Common myeloid progenitor, CD34-positive (primary cell): ENCODE measurements at regions of chr3 and their contacts with region 1.

Region 1: GRCh38 chr3:88203642-88204055 is 53.9 kb downstream of the C3orf38 start:
- DNase-seq: peak; percentile 55 to 76 (median 70)
- H3K4me3 ChIP-seq: no peak overlapping the region
- H3K27ac ChIP-seq: no peak overlapping the region
- H3K4me1 ChIP-seq: peaks cover 0 to 2% (median 0%) of the 10 kb centered on the region in 4 experiments
- H3K27me3 ChIP-seq: peaks cover 0 to 2% (median 0%) of the 10 kb centered on the region in 5 experiments

Region 2: GRCh38 chr3:90091204-90091924 is 1887.7 kb after region 1 on chr3:
- CTCF ChIA-PET with region 1: interaction called, 15 read pairs
- POLR2A ChIA-PET with region 1: no interaction called
- DNase-seq: peak; percentile 21 to 48 (median 47)
- H3K4me3 ChIP-seq: no peak overlapping the region
- H3K27ac ChIP-seq: no peak overlapping the region
- H3K4me1 ChIP-seq: no peaks in the 10 kb centered on the region
- H3K27me3 ChIP-seq: no peaks in the 10 kb centered on the region